ENCODE measurements at regions of chr10 and their contacts with region 1.

Region 1: DNA sequence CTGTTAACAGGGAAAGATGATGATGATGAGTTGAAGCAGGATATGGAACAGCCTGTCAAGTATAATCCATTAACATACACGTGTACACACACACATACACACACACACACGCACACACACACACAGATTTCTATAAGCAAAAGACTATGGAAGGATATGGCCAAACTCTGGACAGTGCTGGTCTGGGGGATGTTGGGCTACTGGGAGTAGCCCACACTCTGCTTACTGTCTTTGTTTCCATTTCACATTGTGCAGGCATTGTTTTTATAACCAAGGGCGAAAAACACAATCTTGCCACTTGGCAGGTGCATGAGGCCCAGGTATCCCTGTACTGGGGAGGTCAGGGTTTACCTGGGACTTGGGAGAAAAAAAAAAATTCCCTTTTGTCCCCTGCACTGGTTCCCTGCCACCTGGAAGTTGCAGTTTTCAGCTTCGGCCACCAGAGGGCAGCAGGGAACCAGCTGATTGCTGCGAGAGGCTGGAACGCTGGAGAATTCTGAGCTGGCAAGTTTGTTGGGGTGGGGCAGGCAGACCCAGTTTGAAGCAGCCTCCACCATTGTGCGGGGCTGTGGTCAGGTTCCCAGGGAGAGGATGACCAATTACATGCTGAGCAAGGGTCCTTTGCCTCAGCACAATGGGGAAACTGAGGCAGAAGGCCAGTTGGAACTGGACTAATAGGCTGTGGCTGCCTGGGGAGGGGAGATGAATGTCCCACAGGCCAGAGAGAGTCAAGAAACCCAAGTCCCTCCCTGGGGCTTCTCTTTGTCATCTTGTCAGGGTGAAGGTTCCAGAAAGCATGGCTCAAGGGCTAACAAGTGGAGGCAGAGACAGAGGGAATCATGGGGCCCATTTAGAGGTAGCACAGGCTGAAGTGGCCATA is 27.3 kb downstream of the PPIF start:
- DNase-seq: peak; percentile 55
- H3K4me3 Mint-ChIP-seq: no peak overlapping the region
- H3K27ac Mint-ChIP-seq: no peak overlapping the region
- H3K4me1 Mint-ChIP-seq: peaks cover 9% of the 10 kb centered on the region
- H3K27me3 Mint-ChIP-seq: peaks cover 28% of the 10 kb centered on the region

Region 2: GRCh38 chr10:79093658-79094411 is 280.7 kb before region 1 on chr10:
- intact Hi-C with region 1: no loop called
- DNase-seq: no peak
- H3K4me3 Mint-ChIP-seq: no peak overlapping the region
- H3K27ac Mint-ChIP-seq: peak overlapping the region; percentile 49
- H3K4me1 Mint-ChIP-seq: peaks cover 12% of the 10 kb centered on the region
- H3K27me3 Mint-ChIP-seq: peaks cover 3% of the 10 kb centered on the region

Region 3: DNA sequence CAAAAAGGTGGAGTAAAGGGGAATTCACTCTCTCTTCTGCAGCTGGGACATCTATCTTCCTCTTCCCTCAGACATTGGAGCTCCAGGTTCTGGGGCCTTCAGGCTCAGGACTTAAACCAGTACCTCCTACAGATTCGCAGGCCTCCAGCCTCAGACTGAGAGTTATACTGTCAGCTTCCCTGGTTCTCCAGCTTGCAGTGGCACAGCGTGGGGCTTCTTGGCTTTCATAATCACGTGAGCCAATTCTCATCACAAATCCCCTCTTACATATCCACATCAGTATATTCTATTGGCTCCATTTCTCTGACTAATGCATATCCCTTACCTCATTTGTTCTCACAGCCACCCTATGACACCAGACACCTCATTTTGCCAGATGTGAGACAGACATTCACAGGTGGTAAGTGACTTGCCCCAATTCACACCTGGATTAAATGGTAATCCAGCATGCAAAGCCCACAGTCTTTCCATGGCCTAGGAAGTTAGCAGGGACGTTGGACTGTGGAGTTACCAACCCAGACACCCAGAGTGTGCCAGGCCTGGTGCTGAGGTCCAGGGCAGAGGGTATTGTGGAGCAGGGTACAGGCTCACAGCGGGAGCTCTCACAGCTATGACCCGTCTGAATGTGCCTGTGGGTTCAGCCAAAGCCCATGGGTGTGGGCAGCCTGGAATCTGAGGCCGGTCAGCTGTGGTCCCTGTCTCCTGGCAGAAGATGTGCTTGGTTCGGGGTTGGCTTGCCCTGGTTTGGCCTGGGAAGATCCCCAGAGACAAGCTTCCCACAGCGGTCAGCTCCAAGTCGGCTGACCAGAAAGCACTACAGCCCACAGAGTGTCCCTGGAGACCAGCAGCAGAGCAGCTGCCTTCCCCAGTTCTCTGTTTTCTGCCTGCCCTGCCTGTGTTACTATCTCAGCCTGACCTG is 89.3 kb after region 1 on chr10:
- intact Hi-C with region 1: loop called (anchors 1 kb)
- DNase-seq: no peak
- H3K4me3 Mint-ChIP-seq: no peak overlapping the region
- H3K27ac Mint-ChIP-seq: no peak overlapping the region
- H3K4me1 Mint-ChIP-seq: no peaks in the 10 kb centered on the region
- H3K27me3 Mint-ChIP-seq: peaks cover 3% of the 10 kb centered on the region

Region 4: DNA sequence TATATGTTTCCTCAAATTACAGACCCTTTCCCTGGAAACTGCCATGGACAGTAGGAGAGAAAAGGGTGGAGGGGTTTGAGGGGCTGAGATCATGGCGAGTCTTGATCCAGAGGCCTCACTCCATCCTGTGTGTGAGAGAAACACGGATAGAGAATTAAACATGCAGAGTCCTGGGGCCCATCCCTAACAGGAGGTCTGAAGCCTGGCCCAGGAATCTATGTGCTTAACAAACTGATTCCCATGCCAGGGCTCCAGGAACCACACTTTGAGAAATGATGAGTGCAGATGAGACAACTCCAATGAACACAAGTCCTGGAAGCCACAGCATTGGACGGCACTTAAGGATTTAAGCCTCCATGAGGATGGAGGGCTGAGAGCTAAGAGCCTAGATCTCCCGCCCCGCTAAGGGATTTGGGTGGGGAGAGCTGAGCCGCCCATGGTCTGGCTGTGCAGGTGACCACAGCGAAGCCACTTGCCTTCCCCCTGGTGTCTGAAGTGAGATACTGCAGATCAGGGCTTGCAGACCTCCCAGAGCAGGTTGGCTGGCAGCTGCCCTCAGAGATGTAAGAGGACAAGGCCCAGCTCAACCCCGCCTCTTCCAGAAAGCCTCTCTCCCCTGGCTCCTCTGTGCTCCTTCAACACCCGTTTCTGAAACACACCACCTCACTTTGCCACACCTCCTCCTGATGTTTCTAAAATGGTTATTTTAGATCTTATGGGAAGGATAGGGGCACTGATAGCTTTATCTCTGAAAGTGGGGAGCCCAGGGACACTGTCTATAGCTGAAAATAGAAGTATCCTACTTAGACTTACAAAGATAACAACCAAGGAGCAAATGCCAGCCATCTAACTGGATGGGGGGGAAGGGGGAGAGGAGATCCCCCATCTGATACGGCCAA is 113.0 kb after region 1 on chr10:
- intact Hi-C with region 1: loop called (anchors 1 kb)
- DNase-seq: peak; percentile 15
- H3K4me3 Mint-ChIP-seq: no peak overlapping the region
- H3K27ac Mint-ChIP-seq: no peak overlapping the region
- H3K4me1 Mint-ChIP-seq: no peaks in the 10 kb centered on the region
- H3K27me3 Mint-ChIP-seq: peaks cover 11% of the 10 kb centered on the region

Region 5: GRCh38 chr10:79608505-79609375 is 234.2 kb after region 1 on chr10:
- intact Hi-C with region 1: loop called (anchors 10 kb)
- DNase-seq: peak; percentile 21
- H3K4me3 Mint-ChIP-seq: no peak overlapping the region
- H3K27ac Mint-ChIP-seq: no peak overlapping the region
- H3K4me1 Mint-ChIP-seq: peaks cover 11% of the 10 kb centered on the region
- H3K27me3 Mint-ChIP-seq: peaks cover 7% of the 10 kb centered on the region

Measured in activated T-helper 1 cell treated with anti-CD3 and anti-CD28 coated beads, Interleukin-12 subunit alpha, Interleukin-12 subunit beta, Interleukin-2, Interleukin-4 antibody, amounts not matched to agents 30 ng/mL and 10 ng/mL and 1 ng/mL, durations not matched to agents 14 hours and 24 hours and 36 hours (primary cell).